K562 (cell line): ENCODE measurements at regions of chrX and their contacts with region 1.

Region 1: GRCh38 chrX:129823115-129823514 is 20.6 kb downstream of the ZDHHC9 start:
- DNase-seq: peak; percentile 48 to 63 (median 50)
- ATAC-seq: peak; percentile 88
- H3K4me3 ChIP-seq: no peak overlapping the region
- H3K27ac ChIP-seq: no peak overlapping the region
- H3K4me1 ChIP-seq: 0 out of 5 replicates have a peak, but pooled peaks cover 0 to 2% of the 10 kb centered on the region in 2 experiments
- H3K27me3 ChIP-seq: no peaks in the 10 kb centered on the region
- CTCF ChIP-seq: peak; percentile 55 to 64 (median 58)
- EP300 ChIP-seq: no peak
- POLR2A ChIP-seq: no peak
- RAD21 ChIP-seq: peak; percentile 64

Region 2: DNA sequence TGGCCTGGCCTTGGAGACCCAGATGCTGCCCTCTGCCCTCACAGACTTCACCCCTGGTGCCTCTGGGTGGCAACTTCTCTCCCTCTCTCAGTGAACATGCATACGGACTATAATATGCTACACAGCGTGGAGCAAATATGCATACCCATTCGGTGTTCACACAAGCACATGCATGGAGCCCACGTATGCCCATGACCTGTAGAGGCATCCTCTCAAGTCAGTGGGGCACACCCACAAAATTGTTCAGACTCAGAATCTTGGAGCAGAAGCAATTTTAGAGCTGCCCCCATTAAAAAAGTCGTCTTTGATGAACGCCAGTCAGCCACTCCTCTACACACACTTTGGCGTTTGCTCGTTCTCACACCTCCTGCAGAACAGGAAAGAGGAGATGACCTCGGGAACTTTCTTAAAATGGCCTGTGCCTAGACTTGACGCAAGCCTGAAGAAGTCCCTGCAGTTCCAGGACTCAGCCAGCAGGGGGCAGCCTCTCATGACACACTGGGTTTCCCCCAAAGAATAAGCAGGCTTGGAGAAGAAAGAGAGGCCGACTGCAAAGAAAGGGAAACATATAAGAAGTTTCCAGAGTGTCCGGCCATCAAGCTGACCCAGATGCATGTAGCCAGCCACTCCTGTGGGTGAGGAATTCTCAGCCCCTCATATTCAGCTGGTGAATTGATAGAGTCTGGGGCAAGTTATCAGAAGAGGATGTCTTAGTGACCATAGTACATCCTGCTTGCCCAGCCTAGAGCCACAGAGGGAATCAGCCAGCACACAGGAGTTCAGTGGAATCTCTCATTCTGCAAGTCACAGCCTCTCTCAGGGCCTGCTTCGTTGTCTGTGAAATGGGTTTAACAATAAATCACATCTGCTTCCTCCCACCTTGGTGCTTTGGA is 185.7 kb before region 1 on chrX:
- CTCF ChIA-PET with region 1: no interaction called
- POLR2A ChIA-PET with region 1: no interaction called
- in situ Hi-C with region 1: no loop called
- intact Hi-C with region 1: loop called (anchors 1 kb)
- DNase-seq: peak; percentile 60 to 81 (median 67)
- ATAC-seq: peak; percentile 80
- H3K4me3 ChIP-seq: no peak overlapping the region
- H3K27ac ChIP-seq: no peak overlapping the region
- H3K4me1 ChIP-seq: peaks cover 14 to 19% of the 10 kb centered on the region in 2 experiments
- H3K27me3 ChIP-seq: peaks cover 0 to 4% of the 10 kb centered on the region in 2 experiments; a peak in 2 of 5 replicates
- CTCF ChIP-seq: peak; percentile 77 to 91 (median 86)
- EP300 ChIP-seq: no peak
- POLR2A ChIP-seq: no peak
- RAD21 ChIP-seq: peak; percentile 45 to 74; a peak in 3 of 4 replicates